ENCODE measurements at regions of chr16 and their contacts with region 1.

Region 1: GRCh38 chr16:2340564-2341455 is at the start of gene ABCA3:
- DNase-seq: peak; percentile 55
- H3K4me3 ChIP-seq: peak within 1 kb of the TSS; percentile 51 to 90 (median 64)
- H3K27ac ChIP-seq: peak within 1 kb of the TSS; percentile 18 to 64 (median 43)
- H3K4me1 ChIP-seq: peaks cover 8 to 27% (median 20%) of the 10 kb centered on the region in 3 donors
- H3K27me3 ChIP-seq: peaks cover 0 to 24% (median 0%) of the 10 kb centered on the region in 4 donors
- CTCF ChIP-seq: peak; percentile 98 to 100 (median 100)
- POLR2A ChIP-seq: peak in 1 of 4 donors; percentile 22
- total RNA-seq, gene ABCA3: 0.70 to 3.2 (median 2.7) TPM

Region 2: DNA sequence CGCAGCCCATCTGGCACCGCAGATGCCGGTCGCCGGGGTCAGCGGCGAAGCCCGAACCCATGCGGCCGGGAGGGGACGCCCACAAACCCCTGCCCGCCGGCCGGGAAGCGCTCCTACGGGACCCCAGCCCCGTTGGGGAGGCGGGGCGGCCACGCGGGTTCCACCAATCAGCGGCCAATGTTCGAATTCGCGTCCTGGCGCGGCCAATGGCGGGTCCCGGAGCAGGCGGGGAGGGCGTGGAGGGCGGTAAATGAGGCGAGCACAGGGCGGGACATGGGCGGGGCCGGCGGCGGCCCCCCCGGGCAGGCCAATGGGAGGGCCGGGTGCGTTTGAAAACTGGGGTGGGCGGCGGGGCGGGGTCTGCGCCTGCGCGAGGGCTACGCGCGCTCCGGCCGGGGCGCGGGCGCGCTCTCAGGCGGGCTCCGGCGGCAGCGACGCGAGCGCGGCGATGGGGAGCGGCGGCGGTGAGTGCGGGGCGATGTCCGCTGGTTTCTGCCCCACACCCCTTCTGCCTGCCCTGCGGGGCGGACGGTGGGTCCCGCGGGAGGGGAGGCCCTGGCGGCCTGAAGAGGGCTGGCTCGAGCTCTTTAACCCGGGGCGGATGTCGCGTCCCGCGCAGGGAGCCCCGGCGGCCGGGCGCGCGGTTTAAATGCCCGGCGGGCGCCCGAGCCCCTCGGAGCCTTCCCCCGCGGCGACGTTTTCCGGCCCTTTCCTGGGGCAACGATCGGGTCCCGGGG is 88.4 kb after region 1 on chr16 and contains the start of gene CCNF:
- intact Hi-C with region 1: loop called (anchors 10 kb)
- DNase-seq: peak; percentile 70
- H3K4me3 ChIP-seq: peak within 1 kb of the TSS; percentile 73 to 96 (median 82)
- H3K27ac ChIP-seq: peak within 1 kb of the TSS; percentile 77 to 88 (median 82)
- H3K4me1 ChIP-seq: peaks cover 9 to 29% (median 13%) of the 10 kb centered on the region in 3 donors
- H3K27me3 ChIP-seq: no peaks in the 10 kb centered on the region
- CTCF ChIP-seq: peak in 3 of 6 experiments; percentile 13 to 26 (median 26)
- POLR2A ChIP-seq: peak in 3 of 4 donors; percentile 23 to 59 (median 35)
- total RNA-seq, gene CCNF: 5.9 to 18.6 (median 10.2) TPM